Esophagus squamous epithelium (tissue), 5 donors: ENCODE measurements at regions of chr13 and their contacts with region 1.

Region 1: DNA sequence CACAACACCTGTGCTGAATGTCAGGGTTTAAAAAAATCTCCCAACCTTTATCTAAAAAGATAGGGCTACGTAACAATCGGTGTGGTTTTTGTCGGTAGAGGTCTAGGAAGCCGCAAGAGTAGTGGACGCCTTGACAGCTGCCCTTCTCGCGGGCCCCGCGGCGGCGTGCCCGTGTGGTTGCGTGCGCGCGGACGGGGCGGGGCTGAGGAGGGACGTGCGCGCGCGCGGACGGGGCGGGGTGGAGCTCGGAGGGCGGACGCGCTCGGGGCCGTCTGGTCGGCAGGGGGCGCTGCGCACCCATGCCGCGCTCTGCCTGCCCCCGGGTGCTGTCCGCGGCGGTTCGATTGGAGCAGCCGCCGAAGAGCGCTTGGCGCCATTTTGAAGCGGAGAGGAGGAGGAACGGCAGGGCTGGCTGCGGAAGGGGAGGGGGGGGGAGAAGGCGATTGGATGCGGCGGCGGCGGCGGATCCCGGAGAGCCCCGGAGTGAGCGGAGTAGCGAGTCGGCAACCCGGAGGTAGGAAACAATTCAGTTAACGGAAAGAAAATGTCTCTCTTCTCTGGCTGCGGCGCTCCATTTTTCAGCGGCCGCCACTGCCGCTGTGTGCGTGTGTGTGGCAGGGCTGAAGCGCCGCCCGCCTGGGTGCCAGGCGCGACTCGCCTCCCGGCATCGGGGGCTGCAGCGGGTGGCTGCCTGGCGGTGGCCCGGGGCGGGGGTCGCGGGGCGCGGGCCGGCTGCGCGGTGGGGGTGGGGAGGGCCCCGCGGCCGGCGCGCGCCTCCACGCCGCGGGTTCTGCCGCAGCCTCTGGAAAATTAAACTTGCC is at the start of gene PDS5B:
- DNase-seq: peak; percentile 80
- H3K4me3 ChIP-seq: peak within 1 kb of the TSS; percentile 82 to 94 (median 88)
- H3K27ac ChIP-seq: peak within 1 kb of the TSS; percentile 94 to 99 (median 96)
- H3K4me1 ChIP-seq: peaks cover 0 to 47% (median 14%) of the 10 kb centered on the region in 3 donors
- H3K27me3 ChIP-seq: no peaks in the 10 kb centered on the region
- CTCF ChIP-seq: peak; percentile 74 to 99 (median 98)
- POLR2A ChIP-seq: peak in 3 of 4 donors; percentile 17 to 64 (median 24)
- total RNA-seq, gene PDS5B: 8.9 to 23.5 (median 15.1) TPM

Region 2: DNA sequence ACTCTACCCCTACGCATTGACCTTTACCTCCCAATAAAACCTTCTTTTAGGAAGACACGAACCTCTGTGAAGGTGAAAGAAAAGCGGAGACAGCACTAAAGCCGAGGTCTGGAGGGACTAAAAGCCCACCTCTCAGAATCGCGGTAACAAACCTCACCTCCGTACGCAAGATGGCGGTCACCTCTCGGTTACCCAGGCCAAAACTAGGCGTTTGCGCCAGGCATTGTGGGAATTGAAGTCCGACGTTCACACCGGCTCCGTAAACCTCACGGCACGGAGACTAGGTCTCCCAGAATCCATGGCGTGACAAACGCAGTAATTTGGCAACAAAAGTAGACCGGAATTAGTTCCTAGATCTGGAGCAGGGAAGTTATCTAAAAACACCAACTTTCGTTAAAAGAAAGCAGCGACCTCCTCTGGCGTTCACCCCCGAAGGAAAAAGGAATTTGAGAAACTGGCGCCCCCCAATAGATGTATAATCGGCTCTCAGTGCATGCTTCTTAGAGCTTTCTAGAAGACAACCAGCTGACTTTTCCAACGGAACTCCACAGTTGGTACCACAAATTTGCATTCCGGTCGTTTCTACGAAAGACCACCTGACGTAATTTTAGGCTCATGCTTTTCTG is 47.6 kb before region 1 on chr13 and contains the start of gene N4BP2L2:
- intact Hi-C with region 1: loop called (anchors 10 kb)
- DNase-seq: peak; percentile 70
- H3K4me3 ChIP-seq: peak within 1 kb of the TSS; percentile 53 to 92 (median 74)
- H3K27ac ChIP-seq: peak within 1 kb of the TSS; percentile 88 to 99 (median 94)
- H3K4me1 ChIP-seq: peaks cover 9 to 46% (median 13%) of the 10 kb centered on the region in 3 donors
- H3K27me3 ChIP-seq: no peaks in the 10 kb centered on the region
- CTCF ChIP-seq: peak in 3 of 6 experiments; percentile 8 to 48 (median 13)
- POLR2A ChIP-seq: peak in 1 of 4 donors; percentile 40
- total RNA-seq, gene N4BP2L2: 32.8 to 136 (median 50.3) TPM

Region 3: DNA sequence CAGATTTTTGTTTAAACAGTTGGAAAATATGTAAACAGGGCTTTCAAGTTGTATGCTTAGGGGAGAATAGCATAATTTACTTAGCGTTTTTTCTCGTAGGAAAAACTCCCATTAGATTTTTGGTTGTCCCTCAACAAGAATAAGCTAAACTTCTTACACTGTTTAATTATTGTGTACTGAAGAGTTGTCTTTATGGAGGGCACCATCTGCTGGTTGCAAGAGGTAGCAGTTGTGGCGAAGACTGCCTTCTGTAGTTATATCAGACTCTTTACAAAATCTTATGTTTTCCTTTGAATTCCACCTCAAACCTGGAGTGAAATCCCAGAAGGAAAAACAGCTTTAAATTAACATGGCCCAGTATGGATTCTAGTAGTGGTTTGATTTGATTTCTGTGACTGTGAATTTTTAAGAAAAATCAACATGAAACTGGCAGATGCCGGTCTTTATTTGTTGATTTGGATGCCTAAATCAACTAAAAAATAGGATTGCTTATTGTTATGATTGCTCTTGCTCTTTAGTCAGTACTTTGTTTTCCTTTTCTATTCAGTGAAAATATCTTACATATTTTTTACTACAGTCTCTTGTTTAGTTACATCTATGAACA is 53.3 kb after region 1 on chr13:
- intact Hi-C with region 1: loop called (anchors 5 kb)
- DNase-seq: no peak
- H3K4me3 ChIP-seq: no peak overlapping the region
- H3K27ac ChIP-seq: no peak overlapping the region
- H3K4me1 ChIP-seq: peaks cover 0 to 30% (median 0%) of the 10 kb centered on the region in 3 donors
- H3K27me3 ChIP-seq: no peaks in the 10 kb centered on the region
- CTCF ChIP-seq: peak; percentile 48 to 79 (median 72)
- POLR2A ChIP-seq: no peak

Region 4: DNA sequence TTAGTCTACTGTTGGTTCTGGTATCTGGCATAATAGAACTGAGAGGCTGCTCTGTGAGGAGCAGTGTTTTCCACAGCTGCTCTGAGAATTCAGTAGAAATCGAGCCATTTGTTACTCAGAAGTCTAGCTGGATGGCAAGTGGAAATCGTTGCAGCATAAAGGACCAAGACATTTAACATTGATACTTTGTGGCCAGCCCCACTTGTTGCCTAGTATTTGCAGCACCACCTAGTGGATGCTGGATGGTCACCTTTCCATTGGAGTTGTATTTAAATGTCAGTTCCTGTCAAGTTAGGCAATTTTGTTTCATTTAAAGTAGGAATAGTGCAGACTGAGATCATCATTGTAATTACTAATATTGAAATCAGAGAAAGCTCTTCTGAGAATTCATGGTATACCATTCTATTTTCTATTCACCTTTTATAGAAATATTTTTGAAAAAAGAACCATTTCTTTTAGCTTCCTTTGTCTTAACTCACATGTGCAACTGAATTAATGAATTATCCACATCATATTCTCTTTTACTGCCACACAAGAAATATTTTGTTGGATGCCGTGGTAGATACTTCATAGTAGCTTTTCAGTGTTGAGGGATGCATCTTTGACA is 64.5 kb after region 1 on chr13:
- intact Hi-C with region 1: loop called (anchors 5 kb)
- DNase-seq: no peak
- H3K4me3 ChIP-seq: no peak overlapping the region
- H3K27ac ChIP-seq: no peak overlapping the region
- H3K4me1 ChIP-seq: peaks cover 0 to 13% (median 0%) of the 10 kb centered on the region in 3 donors
- H3K27me3 ChIP-seq: no peaks in the 10 kb centered on the region
- CTCF ChIP-seq: peak; percentile 18 to 67 (median 54)
- POLR2A ChIP-seq: no peak